ENCODE measurements at regions of chr12 and their contacts with region 1.

Region 1: GRCh38 chr12:80186727-80187217 is 87.4 kb downstream of the OTOGL start:
- DNase-seq: no peak
- ATAC-seq: peak; percentile 94

Region 2: GRCh38 chr12:79555028-79555930 is 631.5 kb before region 1 on chr12:
- intact Hi-C with region 1: loop called (anchors 5 kb)
- DNase-seq: no peak
- ATAC-seq: peak; percentile 66

Region 3: DNA sequence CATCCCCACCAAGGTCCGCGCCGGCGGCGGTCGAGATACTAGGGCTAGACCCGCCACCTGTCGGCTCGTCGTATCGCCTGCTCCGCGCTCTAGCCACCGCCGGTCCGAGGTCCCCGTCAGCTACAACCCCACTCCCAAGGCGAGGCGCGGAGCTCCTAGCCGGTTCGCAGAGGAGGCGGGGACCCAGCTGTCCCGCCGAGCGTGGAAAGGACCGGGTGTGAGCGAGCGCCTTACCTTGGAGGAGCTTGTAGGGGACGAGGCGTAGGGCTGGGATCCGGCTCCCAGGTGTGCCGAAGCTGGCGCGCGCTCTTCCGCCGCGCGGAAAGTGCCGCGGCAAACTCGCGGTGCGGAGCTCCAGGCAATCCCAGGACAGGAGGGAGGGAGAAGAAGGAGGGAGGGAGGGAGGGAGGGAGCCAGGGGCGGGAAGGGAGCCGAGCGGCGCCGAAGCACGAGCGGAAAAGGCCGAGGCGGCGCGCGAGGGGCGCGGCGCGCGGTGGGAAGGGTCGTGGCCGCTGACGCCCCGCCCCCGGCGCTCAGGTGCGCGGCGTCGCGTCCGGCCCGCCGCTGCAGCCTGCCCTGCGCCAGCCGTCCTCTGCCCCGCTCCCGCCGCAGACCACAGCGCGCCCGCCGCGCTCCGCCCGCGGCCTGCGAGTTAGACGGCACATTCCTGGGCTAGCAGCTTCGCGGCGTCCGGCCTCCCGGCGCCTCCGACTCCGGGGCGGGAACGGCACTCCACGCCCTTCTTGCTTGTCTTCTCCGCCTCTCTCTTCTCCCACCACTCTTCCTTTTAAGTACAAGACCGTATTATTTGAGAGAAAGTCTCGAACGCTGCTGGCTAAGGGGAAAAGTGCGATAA is 495.9 kb before region 1 on chr12 and contains the start of gene PAWR:
- intact Hi-C with region 1: loop called (anchors 5 kb)
- DNase-seq: peak; percentile 78
- ATAC-seq: peak; percentile 78
- total RNA-seq, gene PAWR: 11.8 TPM

Region 4: GRCh38 chr12:79776111-79776510 is 410.7 kb before region 1 on chr12:
- intact Hi-C with region 1: loop called (anchors 10 kb)
- DNase-seq: no peak
- ATAC-seq: peak; percentile 39

Region 5: DNA sequence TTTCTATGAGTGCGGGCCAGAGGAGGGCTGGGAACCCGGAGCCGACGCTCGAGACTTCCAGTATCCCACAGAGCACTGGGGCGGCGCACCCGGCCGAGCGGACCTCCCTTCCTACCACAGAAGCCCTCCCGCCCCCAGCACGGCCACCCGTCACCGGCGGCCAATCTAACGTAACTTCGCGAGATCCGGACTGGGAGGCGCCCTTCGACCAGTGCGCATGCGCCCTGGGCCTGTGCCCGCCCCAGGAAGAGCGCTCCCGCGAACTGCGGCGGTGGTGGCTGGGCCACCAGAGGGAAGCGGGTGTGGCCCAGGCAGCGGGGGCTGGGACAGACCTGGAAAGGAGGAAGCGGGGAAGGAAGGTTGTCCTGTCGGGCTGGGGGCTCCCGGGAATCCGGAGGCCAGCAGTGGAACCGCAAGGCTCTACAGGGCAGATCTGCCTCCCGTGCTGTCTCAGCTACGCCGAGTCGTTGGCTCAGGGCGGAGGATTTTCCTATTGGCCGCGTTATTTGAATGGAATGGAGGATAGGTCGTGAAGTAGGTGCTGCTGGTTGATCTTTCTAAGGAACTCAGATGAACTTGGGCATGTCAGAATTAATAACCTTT is 251.7 kb before region 1 on chr12 and contains the start of gene PPP1R12A:
- intact Hi-C with region 1: loop called (anchors 1 kb)
- DNase-seq: peak; percentile 99
- ATAC-seq: peak; percentile 99
- total RNA-seq, gene PPP1R12A: 43.9 TPM

Region 6: DNA sequence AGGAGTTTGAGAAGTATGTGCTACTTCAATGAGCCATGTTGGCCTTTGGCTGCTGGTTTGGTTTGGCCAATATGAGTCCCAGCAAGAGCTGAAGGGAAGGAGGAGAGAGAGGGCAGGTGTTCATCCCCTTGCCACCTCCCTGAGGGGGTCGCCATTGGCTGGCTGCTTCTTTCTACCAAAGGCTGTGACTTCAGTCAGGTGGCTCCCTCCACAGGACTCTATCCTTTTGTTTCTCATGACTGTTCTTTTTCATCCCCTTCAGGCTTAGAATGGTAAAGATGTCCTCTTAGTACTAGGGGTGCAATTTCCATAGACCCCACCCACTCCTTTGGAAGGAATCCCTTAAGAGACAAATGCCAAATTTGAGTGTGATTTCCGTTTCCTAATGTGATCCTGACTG is 118.6 kb before region 1 on chr12:
- intact Hi-C with region 1: no loop called
- DNase-seq: no peak
- ATAC-seq: no peak

Measured in Right ventricle myocardium inferior (tissue), 1 donor.